ENCODE measurements at regions of chr17 and their contacts with region 1.

Region 1: DNA sequence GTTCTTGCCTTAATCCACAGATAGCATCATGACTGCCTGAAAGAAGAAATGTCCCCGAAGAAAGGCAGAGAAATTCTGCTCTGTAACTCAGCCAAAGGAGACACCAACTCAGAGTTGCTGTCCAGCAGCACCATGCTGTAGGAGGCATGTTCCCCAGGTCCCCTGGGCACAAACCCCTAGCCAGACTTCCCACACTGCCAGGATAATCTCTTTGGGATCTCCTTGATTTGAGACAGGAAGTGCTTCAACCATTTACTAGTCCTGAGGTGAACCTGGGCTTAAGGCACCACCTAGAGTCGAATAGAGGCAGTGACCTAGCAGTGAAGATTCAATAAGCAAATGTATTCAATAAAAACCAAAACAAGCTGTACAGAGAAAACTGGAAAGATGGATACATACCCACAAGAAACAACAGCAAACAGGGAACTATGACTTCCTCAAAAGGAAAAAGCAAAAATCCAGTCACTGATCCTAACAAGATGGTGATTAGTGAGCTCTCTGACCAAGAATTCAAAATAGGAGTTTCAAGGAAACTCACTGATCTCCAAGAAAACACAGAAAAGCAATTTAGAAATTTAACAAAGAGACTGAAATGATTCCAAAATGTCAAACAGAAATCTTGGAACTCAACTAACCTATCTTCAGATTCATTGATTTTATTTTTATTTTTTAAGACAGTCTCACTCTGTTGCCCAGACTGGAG is 5.7 kb downstream of the OR4D2 start:
- DNase-seq: peak; percentile 73
- ATAC-seq: peak; percentile 88
- H3K4me3 Mint-ChIP-seq: no peak overlapping the region
- H3K27ac Mint-ChIP-seq: peak overlapping the region; percentile 60
- H3K4me1 Mint-ChIP-seq: peaks cover 35% of the 10 kb centered on the region
- H3K27me3 Mint-ChIP-seq: peaks cover 22% of the 10 kb centered on the region

Region 2: GRCh38 chr17:58112970-58113631 is 59.4 kb before region 1 on chr17:
- CTCF ChIA-PET with region 1: interaction called, 44 read pairs
- POLR2A ChIA-PET with region 1: no interaction called
- DNase-seq: peak; percentile 90
- ATAC-seq: peak; percentile 88
- H3K4me3 Mint-ChIP-seq: no peak overlapping the region
- H3K27ac Mint-ChIP-seq: no peak overlapping the region
- H3K4me1 Mint-ChIP-seq: no peaks in the 10 kb centered on the region
- H3K27me3 Mint-ChIP-seq: peaks cover 7% of the 10 kb centered on the region

Region 3: GRCh38 chr17:58121925-58122324 is 50.6 kb before region 1 on chr17:
- CTCF ChIA-PET with region 1: interaction called, 90 read pairs
- POLR2A ChIA-PET with region 1: no interaction called
- DNase-seq: peak; percentile 58
- ATAC-seq: peak; percentile 75
- H3K4me3 Mint-ChIP-seq: no peak overlapping the region
- H3K27ac Mint-ChIP-seq: no peak overlapping the region
- H3K4me1 Mint-ChIP-seq: peaks cover 4% of the 10 kb centered on the region
- H3K27me3 Mint-ChIP-seq: peaks cover 13% of the 10 kb centered on the region

Region 4: DNA sequence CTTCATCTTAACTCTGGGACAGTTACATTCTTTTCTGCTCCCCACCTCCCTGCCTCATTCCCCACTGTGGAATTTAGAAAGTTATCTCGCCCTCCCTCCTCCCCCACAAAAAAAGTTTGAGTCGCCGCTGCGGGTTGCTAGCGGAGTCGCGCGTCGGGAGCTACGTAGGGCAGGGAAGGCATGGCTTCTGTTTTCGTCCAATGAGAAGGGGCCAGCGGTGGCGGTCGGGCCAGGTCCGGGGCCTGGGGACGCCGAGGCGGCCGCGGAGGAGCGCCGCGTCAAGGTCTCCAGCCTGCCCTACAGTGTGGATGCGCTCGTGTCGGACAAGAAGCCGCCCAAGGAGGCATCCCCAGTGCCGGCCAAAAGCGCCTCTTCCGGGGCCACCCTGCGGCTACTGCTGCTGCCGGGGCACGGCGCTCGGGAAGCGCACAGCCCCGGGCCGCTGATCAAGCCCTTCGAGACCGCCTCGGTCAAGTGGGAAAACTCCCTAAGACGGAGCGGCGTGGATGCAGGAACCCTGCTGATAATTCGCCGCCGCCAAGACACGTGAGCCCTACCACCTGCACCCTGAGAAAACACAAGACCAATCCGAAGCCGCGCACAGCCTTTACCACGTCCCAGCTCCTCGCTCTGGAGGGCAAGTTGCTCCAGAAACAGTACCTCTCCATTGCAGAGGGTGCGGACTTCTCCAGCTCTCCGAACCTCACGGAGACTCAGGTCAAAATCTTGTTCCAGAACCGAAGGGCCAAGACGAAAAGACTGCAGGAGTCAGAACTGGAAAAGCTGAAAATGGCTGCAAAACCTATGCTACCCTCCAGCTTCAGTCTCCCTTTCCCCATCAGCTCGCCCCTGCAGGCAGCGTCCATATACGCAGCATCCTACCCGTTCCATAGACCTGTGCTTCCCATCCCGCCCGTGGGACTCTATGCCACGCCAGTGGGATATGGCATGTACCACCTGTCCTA is 15.4 kb before region 1 on chr17:
- CTCF ChIA-PET with region 1: interaction called, 30 read pairs
- POLR2A ChIA-PET with region 1: interaction called, 3 read pairs
- DNase-seq: peak; percentile 70
- ATAC-seq: peak; percentile 77
- H3K4me3 Mint-ChIP-seq: peak overlapping the region; percentile 79
- H3K27ac Mint-ChIP-seq: peak overlapping the region; percentile 81
- H3K4me1 Mint-ChIP-seq: peaks cover 52% of the 10 kb centered on the region
- H3K27me3 Mint-ChIP-seq: peaks cover 7% of the 10 kb centered on the region

Region 5: DNA sequence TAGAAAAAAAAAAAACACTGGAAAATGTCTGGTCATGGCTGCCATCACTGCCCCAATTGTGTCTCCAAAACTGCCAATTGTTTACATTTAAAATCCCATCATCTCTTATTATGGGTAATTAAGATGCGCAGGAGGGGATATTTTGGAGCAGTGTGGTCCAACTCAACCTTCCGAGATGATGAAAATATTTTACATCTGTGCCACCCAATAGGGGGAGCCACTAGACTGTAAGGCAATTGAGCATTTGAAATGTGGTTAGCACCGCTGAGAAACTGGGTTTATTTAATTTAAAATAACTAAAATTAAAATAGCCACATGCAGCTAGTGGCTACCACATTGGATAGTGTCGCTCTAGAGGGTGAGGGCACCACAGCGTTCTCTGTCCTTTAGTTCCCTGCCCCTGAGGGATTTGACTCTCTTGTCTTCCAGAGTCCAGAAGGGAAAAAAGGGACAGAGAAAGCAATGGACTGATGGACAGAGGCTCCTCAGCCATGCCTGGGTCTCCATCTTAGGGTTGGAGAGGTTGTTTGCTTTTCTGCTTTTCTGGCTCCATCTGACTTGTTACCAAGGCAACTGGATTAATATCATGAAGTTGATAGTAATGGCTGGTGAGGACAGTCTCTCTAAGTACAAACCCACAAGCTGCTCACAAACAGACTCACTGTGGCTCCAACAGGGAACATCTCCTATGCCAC is 104.7 kb after region 1 on chr17:
- CTCF ChIA-PET with region 1: no interaction called
- POLR2A ChIA-PET with region 1: no interaction called
- DNase-seq: peak; percentile 38
- ATAC-seq: no peak
- H3K4me3 Mint-ChIP-seq: no peak overlapping the region
- H3K27ac Mint-ChIP-seq: no peak overlapping the region
- H3K4me1 Mint-ChIP-seq: peaks cover 6% of the 10 kb centered on the region
- H3K27me3 Mint-ChIP-seq: peaks cover 12% of the 10 kb centered on the region